Activated CD8-positive, alpha-beta T cell treated with anti-CD3 and anti-CD28 coated beads for 36 hours (primary cell): ENCODE measurements at regions of chr4 and their contacts with region 1.

Region 1: GRCh38 chr4:153785910-153786721 is 2.8 kb downstream of the SFRP2 start:
- DNase-seq: no peak
- ATAC-seq: no peak
- H3K4me3 Mint-ChIP-seq: no peak overlapping the region
- H3K27ac Mint-ChIP-seq: no peak overlapping the region
- H3K4me1 Mint-ChIP-seq: peaks cover 25% of the 10 kb centered on the region
- H3K27me3 Mint-ChIP-seq: peaks cover 55% of the 10 kb centered on the region
- CTCF ChIP-seq: peak; percentile 62

Region 2: GRCh38 chr4:153962311-153963039 is 176.4 kb after region 1 on chr4:
- CTCF ChIA-PET with region 1: interaction called, 12 read pairs
- POLR2A ChIA-PET with region 1: no interaction called
- intact Hi-C with region 1: no loop called
- DNase-seq: peak; percentile 27
- ATAC-seq: peak; percentile 72
- H3K4me3 Mint-ChIP-seq: no peak overlapping the region
- H3K27ac Mint-ChIP-seq: no peak overlapping the region
- H3K4me1 Mint-ChIP-seq: peaks cover 8% of the 10 kb centered on the region
- H3K27me3 Mint-ChIP-seq: peaks cover 5% of the 10 kb centered on the region
- CTCF ChIP-seq: no peak

Region 3: DNA sequence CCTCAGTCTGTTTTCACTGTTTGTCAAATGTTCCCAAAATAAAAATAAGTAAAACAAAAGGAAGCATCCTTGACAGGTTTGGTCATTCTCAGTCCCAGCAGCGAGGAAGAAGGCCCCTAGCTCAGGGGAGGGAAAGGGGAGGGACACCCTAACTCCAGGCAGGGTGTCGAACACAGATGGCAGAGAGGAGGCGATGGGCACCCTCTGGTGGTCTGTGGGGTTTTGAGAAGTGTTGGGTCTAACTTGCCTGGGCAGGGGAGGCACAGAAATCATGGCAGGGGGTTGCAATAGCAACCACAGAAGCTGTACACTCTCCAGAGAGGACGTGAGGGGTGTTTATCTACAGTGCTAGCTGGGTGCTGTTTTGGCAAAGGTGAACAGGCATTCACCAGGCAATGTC is 232.5 kb after region 1 on chr4:
- CTCF ChIA-PET with region 1: interaction called, 34 read pairs
- POLR2A ChIA-PET with region 1: no interaction called
- intact Hi-C with region 1: loop called (anchors 5 kb)
- DNase-seq: peak; percentile 61
- ATAC-seq: peak; percentile 30
- H3K4me3 Mint-ChIP-seq: no peak overlapping the region
- H3K27ac Mint-ChIP-seq: no peak overlapping the region
- H3K4me1 Mint-ChIP-seq: no peaks in the 10 kb centered on the region
- H3K27me3 Mint-ChIP-seq: peaks cover 5% of the 10 kb centered on the region
- CTCF ChIP-seq: peak; percentile 36

Region 4: DNA sequence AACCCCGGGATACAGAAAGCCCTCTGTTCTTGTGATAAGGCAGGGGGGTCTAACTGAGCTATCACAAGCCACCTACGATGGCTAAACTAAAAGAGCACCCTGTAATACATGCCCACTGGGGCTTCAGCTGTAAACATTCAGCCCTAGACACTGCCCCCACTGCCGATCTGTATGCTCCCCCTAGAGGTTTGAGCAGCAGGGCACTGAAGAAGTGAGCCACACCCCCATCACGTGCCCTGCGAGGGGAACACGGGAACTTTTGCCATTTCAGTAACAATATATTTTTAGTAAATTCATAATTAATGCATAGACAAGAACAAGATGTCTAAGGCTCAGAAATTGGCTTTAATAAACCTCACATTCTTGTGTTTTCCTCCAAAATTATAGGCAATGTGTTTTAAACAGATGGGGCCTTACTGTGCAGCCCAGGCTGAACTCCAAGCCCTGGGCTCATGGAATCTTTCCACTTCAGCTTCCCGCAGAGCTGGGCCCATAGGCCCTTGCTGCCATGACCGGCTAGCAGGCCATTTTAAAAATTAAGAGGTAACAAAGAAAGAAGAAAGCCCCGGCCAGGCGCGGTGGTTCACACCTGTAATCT is 238.1 kb after region 1 on chr4:
- CTCF ChIA-PET with region 1: interaction called, 34 read pairs
- POLR2A ChIA-PET with region 1: no interaction called
- intact Hi-C with region 1: loop called (anchors 5 kb)
- DNase-seq: peak; percentile 7
- ATAC-seq: peak; percentile 42
- H3K4me3 Mint-ChIP-seq: no peak overlapping the region
- H3K27ac Mint-ChIP-seq: no peak overlapping the region
- H3K4me1 Mint-ChIP-seq: no peaks in the 10 kb centered on the region
- H3K27me3 Mint-ChIP-seq: peaks cover 12% of the 10 kb centered on the region
- CTCF ChIP-seq: no peak